Natural killer cell (primary cell): ENCODE measurements at regions of chr5 and their contacts with region 1.

Region 1: DNA sequence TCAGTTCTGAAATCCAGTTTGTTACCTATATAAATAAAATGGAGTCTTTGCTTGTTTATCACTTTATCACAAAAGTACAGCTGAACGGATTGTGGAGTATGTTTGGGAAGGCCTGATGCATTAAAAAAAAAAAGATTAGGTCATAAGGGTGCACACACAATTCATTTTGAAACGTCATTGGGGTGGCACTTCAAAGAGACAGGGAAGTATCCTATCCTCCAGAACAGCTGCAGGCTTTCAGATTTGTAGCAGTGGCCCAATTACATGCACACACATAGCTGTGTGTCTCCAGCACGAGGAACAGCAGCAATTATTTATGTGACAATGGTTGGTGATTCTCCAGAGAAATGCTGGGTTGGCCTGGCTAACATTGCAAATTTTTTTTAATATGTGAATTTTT is 46.8 kb upstream of the FER start:
- DNase-seq: no peak
- ATAC-seq: no peak
- H3K4me3 ChIP-seq: no peak overlapping the region
- H3K4me3 Mint-ChIP-seq: no peak overlapping the region
- H3K27ac ChIP-seq: no peak overlapping the region
- H3K27ac Mint-ChIP-seq: no peak overlapping the region
- H3K4me1 ChIP-seq: no peaks in the 10 kb centered on the region
- H3K4me1 Mint-ChIP-seq: peaks cover 12 to 13% of the 10 kb centered on the region in 2 donors
- H3K27me3 ChIP-seq: no peaks in the 10 kb centered on the region
- H3K27me3 Mint-ChIP-seq: peaks cover 5 to 9% of the 10 kb centered on the region in 2 donors
- CTCF ChIP-seq: no peak

Region 2: GRCh38 chr5:108769352-108769751 is 68.4 kb after region 1 on chr5:
- intact Hi-C with region 1: loop called (anchors 10 kb)
- DNase-seq: no peak
- ATAC-seq: peak; percentile 61 to 72 (median 66)
- H3K4me3 ChIP-seq: no peak overlapping the region
- H3K4me3 Mint-ChIP-seq: peak overlapping the region; percentile 51
- H3K27ac ChIP-seq: no peak overlapping the region
- H3K27ac Mint-ChIP-seq: peak overlapping the region; percentile 0 to 76
- H3K4me1 ChIP-seq: no peaks in the 10 kb centered on the region
- H3K4me1 Mint-ChIP-seq: peaks cover 9% of the 10 kb centered on the region in 2 donors
- H3K27me3 ChIP-seq: no peaks in the 10 kb centered on the region
- H3K27me3 Mint-ChIP-seq: no peaks in the 10 kb centered on the region
- CTCF ChIP-seq: no peak